Endothelial cell of umbilical vein (primary cell): ENCODE measurements at regions of chr1 and their contacts with region 1.

Region 1: GRCh38 chr1:222792744-222793143 is 22.1 kb upstream of the DISP1 start:
- DNase-seq: peak; percentile 44
- H3K4me3 ChIP-seq: no peak overlapping the region
- H3K27ac ChIP-seq: no peak overlapping the region
- H3K4me1 ChIP-seq: peaks cover 10% of the 10 kb centered on the region
- H3K27me3 ChIP-seq: peaks cover 0 to 2% of the 10 kb centered on the region in 2 experiments
- CTCF ChIP-seq: peak; percentile 20 to 29
- POLR2A ChIP-seq: no peak

Region 2: GRCh38 chr1:222266223-222267196 is 526.2 kb before region 1 on chr1:
- CTCF ChIA-PET with region 1: no interaction called
- POLR2A ChIA-PET with region 1: no interaction called
- dilution Hi-C with region 1: no loop called
- intact Hi-C with region 1: no loop called
- DNase-seq: no peak
- H3K4me3 ChIP-seq: no peak overlapping the region
- H3K27ac ChIP-seq: no peak overlapping the region
- H3K4me1 ChIP-seq: no peaks in the 10 kb centered on the region
- H3K27me3 ChIP-seq: no peaks in the 10 kb centered on the region
- CTCF ChIP-seq: no peak
- POLR2A ChIP-seq: no peak

Region 3: GRCh38 chr1:222736972-222737371 is 55.8 kb before region 1 on chr1 and contains the start of gene FAM177B:
- CTCF ChIA-PET with region 1: interaction called, 3 read pairs
- POLR2A ChIA-PET with region 1: no interaction called
- dilution Hi-C with region 1: no loop called
- intact Hi-C with region 1: loop called (anchors 2 kb)
- DNase-seq: no peak
- H3K4me3 ChIP-seq: no peak within 1 kb of the TSS
- H3K27ac ChIP-seq: no peak within 1 kb of the TSS
- H3K4me1 ChIP-seq: no peaks in the 10 kb centered on the region
- H3K27me3 ChIP-seq: no peaks in the 10 kb centered on the region
- CTCF ChIP-seq: no peak
- POLR2A ChIP-seq: no peak
- total RNA-seq, gene FAM177B: not detected in 2 replicates

Region 4: GRCh38 chr1:222769181-222769580 is 23.6 kb before region 1 on chr1:
- CTCF ChIA-PET with region 1: no interaction called
- POLR2A ChIA-PET with region 1: no interaction called
- dilution Hi-C with region 1: no loop called
- intact Hi-C with region 1: no loop called
- DNase-seq: no peak
- H3K4me3 ChIP-seq: no peak overlapping the region
- H3K27ac ChIP-seq: no peak overlapping the region
- H3K4me1 ChIP-seq: peaks cover 2% of the 10 kb centered on the region
- H3K27me3 ChIP-seq: no peaks in the 10 kb centered on the region
- CTCF ChIP-seq: no peak
- POLR2A ChIP-seq: no peak

Region 5: DNA sequence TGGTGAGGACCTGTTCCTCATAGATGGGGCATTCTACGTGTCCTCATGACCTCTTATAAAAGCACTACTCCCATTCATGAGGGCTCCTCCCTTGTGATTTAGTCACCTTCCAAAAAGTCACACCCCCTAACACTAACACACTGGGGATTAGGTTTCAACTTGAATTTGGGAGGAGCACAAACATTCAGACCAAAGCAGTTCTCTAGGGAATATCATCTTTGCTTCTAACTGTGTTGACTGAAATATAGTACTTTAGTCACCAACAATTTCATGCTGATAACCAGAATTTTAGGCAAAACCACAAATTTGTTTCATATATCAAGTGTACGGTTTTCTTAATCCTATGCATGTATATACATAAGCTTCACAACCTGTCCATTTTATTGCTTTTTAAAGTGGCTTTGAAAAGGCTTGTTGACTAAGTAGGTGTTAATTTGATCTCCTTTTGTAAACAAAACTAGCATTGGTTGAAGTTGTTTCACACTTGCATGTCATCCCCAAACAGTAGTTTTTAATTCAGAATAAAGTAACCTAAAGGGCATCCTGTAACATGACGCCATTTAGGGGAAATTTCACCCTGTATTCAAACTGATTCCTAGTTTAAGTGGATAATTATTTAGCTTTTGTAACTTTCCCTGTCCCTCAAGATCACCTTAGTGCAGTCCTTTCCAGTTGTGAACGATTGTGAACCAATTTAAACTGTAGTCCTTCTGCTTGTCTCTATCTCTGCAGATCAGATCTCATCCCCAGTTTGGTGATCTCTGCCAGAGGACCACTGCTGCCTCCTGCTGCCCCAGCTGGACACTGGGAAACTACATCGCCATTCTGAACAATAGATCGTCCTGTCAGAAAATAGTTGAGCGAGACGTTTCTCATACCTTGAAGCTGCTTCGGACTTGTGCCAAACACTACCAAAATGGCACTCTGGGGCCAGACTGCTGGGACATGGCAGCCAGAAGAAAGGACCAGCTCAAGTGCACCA is 209.2 kb after region 1 on chr1:
- CTCF ChIA-PET with region 1: interaction called, 4 read pairs
- POLR2A ChIA-PET with region 1: no interaction called
- dilution Hi-C with region 1: no loop called
- intact Hi-C with region 1: loop called (anchors 1 kb)
- DNase-seq: no peak
- H3K4me3 ChIP-seq: no peak overlapping the region
- H3K27ac ChIP-seq: no peak overlapping the region
- H3K4me1 ChIP-seq: no peaks in the 10 kb centered on the region
- H3K27me3 ChIP-seq: no peaks in the 10 kb centered on the region
- CTCF ChIP-seq: peak; percentile 19 to 22
- POLR2A ChIP-seq: no peak

Region 6: DNA sequence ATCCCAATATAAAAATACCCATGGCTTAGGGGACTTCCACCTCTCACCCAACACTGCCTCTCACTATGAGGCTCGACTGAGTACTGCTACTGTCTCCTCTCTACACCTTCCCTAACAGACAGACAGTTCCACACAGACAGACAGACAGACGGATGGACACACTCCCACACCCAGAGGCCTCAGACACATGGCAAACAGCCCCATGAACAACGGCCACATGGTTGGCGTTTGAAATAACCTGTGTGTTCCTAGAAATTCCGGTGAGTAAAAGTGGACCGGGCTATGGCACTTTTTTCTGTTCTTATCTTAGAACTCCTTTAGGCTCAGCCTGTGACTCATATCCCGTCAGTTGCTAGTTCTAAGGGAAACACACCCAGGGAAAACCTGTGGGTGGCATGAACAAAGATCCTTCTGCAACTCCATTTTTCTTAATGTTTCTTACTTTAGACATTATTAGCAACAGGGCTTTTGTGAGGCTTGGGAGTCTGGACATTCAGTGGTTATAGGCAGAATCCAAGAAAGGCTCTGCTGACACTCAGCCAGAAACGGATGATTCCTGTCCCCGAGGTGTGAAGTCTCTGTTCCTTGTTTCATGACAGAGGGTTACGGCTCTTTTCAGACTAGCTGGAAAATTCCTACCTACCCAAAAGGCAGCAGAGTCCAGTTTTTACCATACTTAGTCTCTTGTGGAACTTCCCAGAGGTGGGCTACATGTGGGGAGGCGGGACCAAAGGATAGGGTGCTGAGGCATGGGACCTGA is 440.8 kb after region 1 on chr1:
- CTCF ChIA-PET with region 1: no interaction called
- POLR2A ChIA-PET with region 1: no interaction called
- dilution Hi-C with region 1: no loop called
- intact Hi-C with region 1: loop called (anchors 10 kb)
- DNase-seq: peak; percentile 91
- H3K4me3 ChIP-seq: no peak overlapping the region
- H3K27ac ChIP-seq: peak overlapping the region; percentile 47
- H3K4me1 ChIP-seq: peaks cover 13% of the 10 kb centered on the region
- H3K27me3 ChIP-seq: no peaks in the 10 kb centered on the region
- CTCF ChIP-seq: no peak
- POLR2A ChIP-seq: no peak

Region 7: GRCh38 chr1:223683586-223684487 is 891.1 kb after region 1 on chr1:
- CTCF ChIA-PET with region 1: interaction called, 4 read pairs
- POLR2A ChIA-PET with region 1: no interaction called
- dilution Hi-C with region 1: no loop called
- intact Hi-C with region 1: loop called (anchors 2 kb)
- DNase-seq: peak; percentile 55
- H3K4me3 ChIP-seq: no peak overlapping the region
- H3K27ac ChIP-seq: no peak overlapping the region
- H3K4me1 ChIP-seq: no peaks in the 10 kb centered on the region
- H3K27me3 ChIP-seq: peaks cover 9 to 24% of the 10 kb centered on the region in 2 experiments
- CTCF ChIP-seq: peak; percentile 54 to 68
- POLR2A ChIP-seq: no peak